Testis (tissue), 5 donors: ENCODE measurements at regions of chr2 and their contacts with region 1.

Region 1: DNA sequence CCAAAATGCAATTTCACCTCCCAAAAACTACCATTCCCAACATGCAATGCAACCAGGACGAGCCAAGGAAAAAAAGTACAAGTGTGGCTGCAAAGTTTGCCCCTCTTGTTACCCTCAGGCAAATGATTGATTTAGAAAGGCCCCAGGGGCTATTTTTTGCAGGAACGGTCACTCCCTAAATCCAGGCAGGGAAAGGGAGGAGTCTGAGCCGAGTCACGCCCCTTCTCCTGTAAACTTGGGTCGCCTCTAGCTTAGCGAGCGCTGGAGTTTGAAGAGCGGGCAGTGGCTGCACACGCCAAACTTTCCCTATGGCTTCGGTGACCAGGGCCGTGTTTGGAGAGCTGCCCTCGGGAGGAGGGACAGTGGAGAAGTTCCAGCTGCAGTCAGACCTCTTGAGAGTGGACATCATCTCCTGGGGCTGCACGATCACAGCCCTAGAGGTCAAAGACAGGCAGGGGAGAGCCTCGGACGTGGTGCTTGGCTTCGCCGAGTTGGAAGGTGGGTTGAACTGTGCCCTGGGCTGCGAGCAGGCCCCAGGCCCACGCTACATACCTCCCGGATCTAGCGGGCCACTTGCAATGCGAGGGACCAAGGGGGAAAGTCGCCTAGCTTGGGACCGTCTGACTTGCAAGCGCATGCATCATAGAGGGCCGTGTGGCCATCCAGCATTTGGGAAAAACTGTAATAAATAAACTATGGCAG is at the start of gene GALM:
- DNase-seq: peak; percentile 89
- H3K4me3 ChIP-seq: peak within 1 kb of the TSS; percentile 55 to 75
- H3K27ac ChIP-seq: peak within 1 kb of the TSS; percentile 61 to 71
- H3K4me1 ChIP-seq: no peaks in the 10 kb centered on the region
- H3K27me3 ChIP-seq: no peaks in the 10 kb centered on the region
- CTCF ChIP-seq: peak in 1 of 3 experiments; percentile 36
- POLR2A ChIP-seq: no peak
- total RNA-seq, gene GALM: 8.5 to 9.1 TPM

Region 2: GRCh38 chr2:38610851-38611801 is 54.9 kb before region 1 on chr2:
- intact Hi-C with region 1: loop called (anchors 10 kb)
- DNase-seq: no peak
- H3K4me3 ChIP-seq: no peak overlapping the region
- H3K27ac ChIP-seq: no peak overlapping the region
- H3K4me1 ChIP-seq: peaks cover 8% of the 10 kb centered on the region
- H3K27me3 ChIP-seq: no peaks in the 10 kb centered on the region
- CTCF ChIP-seq: no peak
- POLR2A ChIP-seq: no peak

Region 3: GRCh38 chr2:38720613-38721241 is 54.7 kb after region 1 on chr2:
- intact Hi-C with region 1: loop called (anchors 10 kb)
- DNase-seq: peak; percentile 96
- H3K4me3 ChIP-seq: no peak overlapping the region
- H3K27ac ChIP-seq: peak overlapping the region in 1 of 2 donors; percentile 71
- H3K4me1 ChIP-seq: peaks cover 15% of the 10 kb centered on the region
- H3K27me3 ChIP-seq: no peaks in the 10 kb centered on the region
- CTCF ChIP-seq: peak in 1 of 3 experiments; percentile 9
- POLR2A ChIP-seq: no peak